Naive thymus-derived CD4-positive, alpha-beta T cell (primary cell): ENCODE measurements at regions of chr1 and their contacts with region 1.

Region 1: GRCh38 chr1:234683861-234684632 is 74.1 kb upstream of the IRF2BP2 start:
- DNase-seq: no peak
- ATAC-seq: peak; percentile 79
- H3K4me3 ChIP-seq: no peak overlapping the region
- H3K4me3 Mint-ChIP-seq: no peak overlapping the region
- H3K27ac ChIP-seq: no peak overlapping the region
- H3K27ac Mint-ChIP-seq: peak overlapping the region in 1 of 9 donors; percentile 10
- H3K4me1 ChIP-seq: no peaks in the 10 kb centered on the region
- H3K4me1 Mint-ChIP-seq: no peaks in the 10 kb centered on the region
- H3K27me3 ChIP-seq: no peaks in the 10 kb centered on the region
- H3K27me3 Mint-ChIP-seq: peaks cover 0 to 6% (median 0%) of the 10 kb centered on the region in 5 donors

Region 2: DNA sequence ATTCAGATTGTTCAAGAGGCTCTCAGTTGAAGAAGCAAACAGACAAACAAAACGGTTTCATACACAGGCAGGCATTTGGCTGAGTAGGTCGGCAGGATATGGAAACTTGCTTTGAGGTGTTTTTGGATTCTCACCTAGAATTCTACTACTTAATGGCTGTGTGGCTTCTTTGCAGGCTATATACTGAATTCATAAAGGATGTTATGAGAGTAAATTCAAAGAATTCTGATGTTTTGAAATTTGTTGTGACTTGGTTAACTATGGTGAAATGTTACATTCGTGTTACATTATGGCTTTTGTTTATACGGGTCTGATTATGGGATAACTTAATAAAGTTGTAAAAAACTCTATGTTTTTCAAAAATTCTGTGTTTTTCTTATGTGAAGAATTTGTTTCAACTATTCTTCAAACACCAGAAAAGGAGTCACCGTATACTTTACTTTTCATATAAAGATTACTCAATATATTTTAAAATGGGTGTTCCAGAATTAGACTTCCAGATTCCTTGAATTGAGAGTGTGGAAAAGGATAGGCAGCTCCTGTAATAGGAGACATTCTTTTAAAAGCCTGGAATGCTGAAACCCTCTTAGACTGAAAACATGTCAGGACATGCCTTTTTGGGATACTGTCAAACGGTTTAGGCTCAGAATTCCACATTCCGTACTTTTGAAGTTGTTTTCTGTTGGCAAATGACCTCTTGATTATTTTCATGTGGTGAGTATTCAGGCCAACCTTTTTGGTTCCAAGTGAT is 65.9 kb before region 1 on chr1:
- CTCF ChIA-PET with region 1: no interaction called
- POLR2A ChIA-PET with region 1: no interaction called
- intact Hi-C with region 1: no loop called
- DNase-seq: no peak
- ATAC-seq: no peak
- H3K4me3 ChIP-seq: no peak overlapping the region
- H3K4me3 Mint-ChIP-seq: no peak overlapping the region
- H3K27ac ChIP-seq: no peak overlapping the region
- H3K27ac Mint-ChIP-seq: no peak overlapping the region
- H3K4me1 ChIP-seq: peaks cover 5 to 12% of the 10 kb centered on the region in 2 donors
- H3K4me1 Mint-ChIP-seq: peaks cover 10 to 32% (median 23%) of the 10 kb centered on the region in 7 donors
- H3K27me3 ChIP-seq: no peaks in the 10 kb centered on the region
- H3K27me3 Mint-ChIP-seq: no peaks in the 10 kb centered on the region

Region 3: DNA sequence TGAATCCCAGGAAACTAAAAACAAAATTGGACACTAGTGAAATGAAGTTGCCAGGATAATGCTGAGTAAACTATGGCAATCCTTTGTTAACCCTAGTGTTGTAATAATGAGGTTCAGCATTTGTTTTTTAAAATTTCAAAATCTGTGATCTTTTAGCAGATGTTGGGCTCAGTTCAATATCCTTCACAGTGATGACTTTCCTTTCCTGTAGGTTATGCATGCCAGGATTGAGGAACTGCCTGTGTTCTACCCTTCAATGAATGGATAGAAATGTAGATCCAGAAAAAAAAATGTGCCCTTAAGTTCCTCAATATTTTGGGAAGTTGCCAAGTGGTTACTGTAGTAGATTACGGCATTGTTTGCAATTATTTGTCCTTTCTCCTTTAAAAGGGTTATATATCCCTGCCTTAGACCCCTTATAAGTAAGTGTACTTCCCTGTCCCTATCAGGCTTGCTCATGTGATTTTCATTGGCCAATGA is 38.5 kb before region 1 on chr1:
- CTCF ChIA-PET with region 1: no interaction called
- POLR2A ChIA-PET with region 1: no interaction called
- intact Hi-C with region 1: loop called in 1 of 2 experiments (anchors 5 kb)
- DNase-seq: no peak
- ATAC-seq: peak; percentile 72
- H3K4me3 ChIP-seq: no peak overlapping the region
- H3K4me3 Mint-ChIP-seq: no peak overlapping the region
- H3K27ac ChIP-seq: no peak overlapping the region
- H3K27ac Mint-ChIP-seq: no peak overlapping the region
- H3K4me1 ChIP-seq: no peaks in the 10 kb centered on the region
- H3K4me1 Mint-ChIP-seq: peaks cover 0 to 4% (median 0%) of the 10 kb centered on the region in 7 donors
- H3K27me3 ChIP-seq: no peaks in the 10 kb centered on the region
- H3K27me3 Mint-ChIP-seq: peaks cover 0 to 5% (median 0%) of the 10 kb centered on the region in 5 donors